Heart right ventricle (tissue), 16 donors: ENCODE measurements at regions of chr22 and their contacts with region 1.

Region 1: DNA sequence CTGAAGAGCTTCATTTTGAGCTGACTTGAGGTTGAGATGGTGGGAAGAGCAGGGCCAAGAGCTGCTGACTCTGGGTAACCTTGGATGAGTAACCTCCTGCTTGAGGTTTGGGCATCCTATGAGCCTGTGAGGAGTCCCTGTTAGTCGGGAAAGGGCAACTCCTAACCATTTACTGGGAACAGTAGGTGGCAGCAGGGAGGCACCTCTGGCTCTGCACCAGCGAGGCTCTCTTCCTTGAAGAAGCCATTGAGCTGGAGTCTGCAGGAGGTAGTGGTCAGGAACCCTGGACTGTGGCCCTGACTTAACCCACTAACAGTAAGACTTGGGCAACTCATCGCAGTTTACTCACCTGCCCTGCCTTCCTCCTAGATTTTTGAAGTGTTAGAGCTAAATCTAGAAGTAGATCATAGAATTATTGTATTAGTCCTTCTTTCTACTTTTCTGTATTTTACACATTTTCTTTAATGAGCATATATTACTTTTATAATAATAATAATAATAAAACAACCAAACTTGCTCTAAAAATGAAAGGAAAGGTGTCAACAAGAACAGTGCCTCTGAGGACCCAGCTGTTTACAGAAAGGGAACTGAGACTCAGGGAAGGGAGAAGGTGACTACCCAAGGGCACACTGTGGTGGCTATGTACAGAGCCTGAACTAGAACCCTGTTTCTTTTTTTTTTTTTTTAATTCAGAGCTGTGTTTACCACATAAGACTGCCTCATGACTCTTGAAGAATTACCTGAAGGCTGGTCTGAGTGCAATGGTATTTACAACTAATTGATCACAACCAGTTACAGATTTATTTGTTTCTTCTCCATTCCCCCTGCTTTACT is 47.5 kb downstream of the MEI1 start:
- DNase-seq: peak; percentile 58 to 70
- ATAC-seq: peak; percentile 51 to 95 (median 84)
- H3K4me3 ChIP-seq: no peak overlapping the region
- H3K27ac ChIP-seq: no peak overlapping the region
- H3K4me1 ChIP-seq: no peaks in the 10 kb centered on the region
- H3K27me3 ChIP-seq: peaks cover 0 to 10% (median 0%) of the 10 kb centered on the region in 7 donors
- CTCF ChIP-seq: peak; percentile 43 to 82 (median 76)

Region 2: GRCh38 chr22:40668611-40669411 is 1078.0 kb before region 1 on chr22:
- intact Hi-C with region 1: no loop called
- DNase-seq: no peak
- ATAC-seq: peak in 3 of 8 donors; percentile 17 to 25 (median 22)
- H3K4me3 ChIP-seq: no peak overlapping the region
- H3K27ac ChIP-seq: peak overlapping the region in 9 of 10 donors; percentile 4 to 88 (median 31)
- H3K4me1 ChIP-seq: peaks cover 9 to 62% (median 43%) of the 10 kb centered on the region in 9 donors
- H3K27me3 ChIP-seq: no peaks in the 10 kb centered on the region
- CTCF ChIP-seq: no peak

Region 3: DNA sequence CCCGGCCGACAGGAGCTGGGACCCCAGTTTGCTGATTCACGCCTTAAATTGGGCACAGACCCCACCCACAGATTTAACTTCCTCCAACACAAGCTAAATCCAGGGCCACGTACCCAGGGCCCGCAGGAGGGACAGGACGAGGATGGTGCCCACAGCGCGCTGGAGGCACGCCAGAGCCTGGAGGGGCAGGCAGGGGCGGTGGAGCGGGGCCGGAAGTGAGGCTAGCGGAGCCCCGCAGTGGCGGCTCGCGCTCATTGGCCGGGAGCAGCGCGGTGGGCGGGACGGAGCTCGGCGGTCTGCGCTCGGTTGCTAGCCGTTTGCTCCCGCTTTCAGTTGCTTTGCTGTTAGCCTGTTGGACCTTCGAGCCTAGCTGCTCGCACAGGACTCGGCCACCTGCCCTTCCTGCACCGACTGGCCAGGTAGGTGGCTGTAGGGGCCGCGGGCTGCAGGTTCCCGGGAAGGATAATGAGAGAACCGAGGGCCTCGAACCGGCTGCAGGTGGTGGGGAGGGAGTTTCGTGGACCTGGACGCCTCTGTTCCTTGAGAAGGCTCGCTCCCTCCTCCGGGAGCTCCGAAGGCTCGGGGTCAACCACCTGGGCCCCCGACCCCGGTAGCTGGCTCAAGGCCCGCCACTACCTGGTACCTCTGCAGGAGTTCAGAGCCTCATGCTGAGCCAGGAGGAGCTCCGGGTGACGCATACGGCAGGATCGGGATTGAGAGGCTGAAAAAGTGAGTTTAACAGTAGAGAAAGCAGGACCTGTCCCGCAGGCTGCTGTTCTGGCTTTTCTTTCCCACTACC is 53.8 kb after region 1 on chr22 and contains the start of gene CCDC134:
- intact Hi-C with region 1: loop called in 1 of 10 experiments (anchors 5 kb)
- DNase-seq: peak; percentile 90 to 95
- ATAC-seq: peak; percentile 97 to 99 (median 99)
- H3K4me3 ChIP-seq: peak within 1 kb of the TSS; percentile 54 to 100 (median 85)
- H3K27ac ChIP-seq: peak within 1 kb of the TSS; percentile 70 to 96 (median 91)
- H3K4me1 ChIP-seq: peaks cover 6 to 31% (median 22%) of the 10 kb centered on the region in 9 donors
- H3K27me3 ChIP-seq: no peaks in the 10 kb centered on the region
- CTCF ChIP-seq: no peak
- total RNA-seq, gene CCDC134: 2.6 to 7.3 (median 4.0) TPM

Region 4: DNA sequence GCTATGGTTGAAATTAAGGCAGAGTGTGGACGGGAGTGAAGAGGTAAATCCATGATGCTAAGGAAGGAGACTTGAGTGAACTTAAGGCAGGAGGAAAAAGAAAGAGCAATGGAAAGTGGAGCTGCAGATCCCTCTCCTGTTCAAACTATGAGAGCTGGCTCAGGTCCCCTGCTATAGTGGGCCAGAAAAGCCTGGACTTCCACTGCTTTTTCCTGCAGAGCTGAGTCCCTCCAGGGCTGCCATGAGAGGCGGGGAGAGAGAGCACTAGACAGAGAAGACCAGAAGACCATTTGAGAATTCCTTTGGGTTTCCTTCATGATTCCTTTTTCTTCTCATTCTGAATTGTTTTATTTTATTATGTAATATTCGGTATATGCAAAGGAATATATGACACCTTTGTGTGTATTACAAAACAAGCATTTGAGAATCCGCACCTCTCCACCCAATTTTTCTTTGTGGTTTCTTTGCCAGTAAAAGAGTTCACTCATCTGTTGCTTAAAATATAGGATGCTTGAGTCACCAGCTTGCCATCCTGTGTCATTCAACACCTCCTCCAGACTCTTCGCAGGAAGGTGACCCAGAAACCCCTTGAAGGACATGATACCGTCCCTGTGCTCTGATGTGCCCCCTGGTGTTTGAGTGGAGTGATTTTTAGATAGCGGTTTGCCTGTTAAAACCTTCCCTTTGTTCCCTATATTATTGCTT is 110.5 kb after region 1 on chr22:
- intact Hi-C with region 1: loop called in 2 of 10 experiments (anchors 5 to 10 kb)
- DNase-seq: peak in 1 of 2 donors; percentile 45
- ATAC-seq: peak; percentile 58 to 82 (median 62)
- H3K4me3 ChIP-seq: no peak overlapping the region
- H3K27ac ChIP-seq: peak overlapping the region in 3 of 10 donors; percentile 28 to 70 (median 36)
- H3K4me1 ChIP-seq: peaks cover 0 to 50% (median 19%) of the 10 kb centered on the region in 9 donors
- H3K27me3 ChIP-seq: no peaks in the 10 kb centered on the region
- CTCF ChIP-seq: peak; percentile 20 to 72 (median 56)